OCI-LY7 (cell line): ENCODE measurements at regions of chr1 and their contacts with region 1.

Region 1: GRCh38 chr1:40224040-40224439 is 23.7 kb upstream of the TMCO2 start:
- DNase-seq: peak; percentile 13
- H3K4me3 ChIP-seq: no peak overlapping the region
- H3K27ac ChIP-seq: no peak overlapping the region
- H3K4me1 ChIP-seq: peaks cover 39% of the 10 kb centered on the region
- CTCF ChIP-seq: no peak

Region 2: DNA sequence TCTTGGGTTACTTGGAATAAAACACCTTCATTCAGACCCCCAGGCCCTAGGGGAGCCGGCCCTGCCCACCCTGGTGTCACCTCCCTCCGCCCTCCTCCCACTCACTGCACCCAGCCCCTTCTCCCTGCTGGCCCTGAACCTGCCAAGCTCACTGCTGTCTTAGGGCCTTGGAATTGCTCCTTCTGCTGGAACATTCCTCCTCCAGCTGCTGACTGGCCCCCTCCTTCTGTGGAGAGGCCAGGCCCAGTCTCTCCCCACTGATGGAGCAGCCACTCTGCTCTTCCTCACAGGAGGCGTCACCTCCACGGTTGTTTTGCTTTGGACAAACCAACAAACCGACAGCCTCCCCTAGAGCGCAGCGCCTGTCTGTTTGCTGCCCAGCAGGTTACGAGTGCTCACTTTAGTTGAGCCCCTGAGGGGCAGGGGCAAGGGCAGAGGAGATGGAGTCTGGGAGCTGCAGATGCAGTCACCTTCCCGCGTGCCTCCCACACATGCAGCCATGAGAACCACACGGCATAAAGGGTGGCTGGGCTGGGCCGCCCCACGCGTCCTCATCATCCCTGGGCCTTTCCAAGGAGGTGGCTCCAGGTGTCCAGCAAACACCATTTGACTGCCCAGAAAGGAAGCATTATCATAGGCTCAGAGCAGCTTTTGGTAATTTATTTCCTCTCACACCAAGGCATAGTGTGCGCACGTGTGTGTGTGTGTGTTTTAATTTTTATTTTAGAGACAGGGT is 462.3 kb before region 1 on chr1:
- CTCF ChIA-PET with region 1: interaction called, 10 read pairs
- POLR2A ChIA-PET with region 1: no interaction called
- intact Hi-C with region 1: no loop called
- DNase-seq: no peak
- H3K4me3 ChIP-seq: no peak overlapping the region
- H3K27ac ChIP-seq: no peak overlapping the region
- H3K4me1 ChIP-seq: no peaks in the 10 kb centered on the region
- CTCF ChIP-seq: no peak